PC-9 (cell line): ENCODE measurements at regions of chrX and their contacts with region 1.

Region 1: DNA sequence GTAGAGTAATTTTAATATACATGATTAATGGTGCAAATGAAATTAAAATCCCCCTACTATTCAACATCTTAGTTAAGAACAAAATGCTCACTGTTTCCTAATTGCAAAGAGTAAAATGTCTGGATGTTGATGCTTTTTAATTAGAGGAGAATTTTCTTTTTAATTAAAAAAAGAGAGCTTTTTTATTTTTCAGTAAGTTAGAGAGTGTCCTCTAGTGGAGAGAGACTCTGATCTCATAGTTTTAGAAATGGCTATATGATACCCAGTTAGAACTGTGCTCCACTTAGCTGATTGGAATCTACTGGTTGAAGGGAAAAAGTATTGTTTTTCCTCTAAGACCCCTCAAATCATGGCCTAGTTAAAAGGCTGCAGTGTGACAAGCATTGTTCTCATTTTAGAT is 312.0 kb upstream of the MAGEB2 start:
- DNase-seq: no peak
- H3K4me3 ChIP-seq: no peak overlapping the region
- H3K27ac ChIP-seq: no peak overlapping the region
- H3K4me1 ChIP-seq: no peaks in the 10 kb centered on the region
- H3K27me3 ChIP-seq: no peaks in the 10 kb centered on the region
- CTCF ChIP-seq: peak; percentile 42; the same call in 1 of the 2 replicates

Region 2: DNA sequence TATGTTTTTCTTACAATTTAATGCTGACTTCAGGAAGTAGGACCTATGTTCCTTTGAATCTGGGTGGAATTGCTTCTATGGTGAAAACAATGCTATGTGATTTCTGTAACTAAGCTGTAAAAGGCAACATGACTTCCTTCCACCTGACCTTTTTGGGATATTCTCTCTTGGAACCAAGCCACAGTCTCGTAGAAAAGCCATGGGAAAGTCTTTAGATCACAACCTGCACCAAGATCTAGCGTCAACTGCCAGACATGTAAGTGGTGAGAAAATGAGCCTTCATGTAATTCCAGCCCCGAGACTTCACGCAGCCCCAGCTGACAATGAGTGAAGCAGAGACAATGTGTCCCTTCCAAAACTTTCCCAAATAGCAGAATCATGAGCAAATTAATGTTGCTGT is 1625.1 kb before region 1 on chrX:
- CTCF ChIA-PET with region 1: no interaction called
- POLR2A ChIA-PET with region 1: no interaction called
- intact Hi-C with region 1: loop called (anchors 5 kb)
- DNase-seq: no peak
- H3K4me3 ChIP-seq: no peak overlapping the region
- H3K27ac ChIP-seq: no peak overlapping the region
- H3K4me1 ChIP-seq: no peaks in the 10 kb centered on the region
- H3K27me3 ChIP-seq: no peaks in the 10 kb centered on the region
- CTCF ChIP-seq: no peak

Region 3: GRCh38 chrX:29518100-29518499 is 385.3 kb before region 1 on chrX:
- CTCF ChIA-PET with region 1: no interaction called
- POLR2A ChIA-PET with region 1: no interaction called
- intact Hi-C with region 1: no loop called
- DNase-seq: no peak
- H3K4me3 ChIP-seq: no peak overlapping the region
- H3K27ac ChIP-seq: no peak overlapping the region
- H3K4me1 ChIP-seq: no peaks in the 10 kb centered on the region
- H3K27me3 ChIP-seq: no peaks in the 10 kb centered on the region
- CTCF ChIP-seq: no peak